IMR-90 (cell line): ENCODE measurements at regions of chr10 and their contacts with region 1.

Region 1: GRCh38 chr10:63629363-63630084 is 108.3 kb downstream of the REEP3 start:
- DNase-seq: peak; percentile 99
- ATAC-seq: peak; percentile 64
- H3K4me3 ChIP-seq: peak overlapping the region; percentile 86
- H3K27ac ChIP-seq: peak overlapping the region; percentile 98
- H3K4me1 ChIP-seq: 0 out of 2 replicates have a peak, but pooled peaks cover 3% of the 10 kb centered on the region
- H3K27me3 ChIP-seq: no peaks in the 10 kb centered on the region
- CTCF ChIP-seq: peak; percentile 93
- POLR2A ChIP-seq: peak; percentile 89
- RAD21 ChIP-seq: peak; percentile 96

Region 2: GRCh38 chr10:63133821-63134557 is 495.5 kb before region 1 on chr10:
- CTCF ChIA-PET with region 1: no interaction called
- POLR2A ChIA-PET with region 1: no interaction called
- dilution Hi-C with region 1: no loop called
- in situ Hi-C with region 1: no loop called
- intact Hi-C with region 1: no loop called
- DNase-seq: peak; percentile 53
- ATAC-seq: no peak
- H3K4me3 ChIP-seq: peak overlapping the region; percentile 82
- H3K27ac ChIP-seq: peak overlapping the region; percentile 80
- H3K4me1 ChIP-seq: peaks cover 2% of the 10 kb centered on the region; the same call in 1 of the 2 replicates
- H3K27me3 ChIP-seq: no peaks in the 10 kb centered on the region
- CTCF ChIP-seq: no peak
- POLR2A ChIP-seq: no peak
- RAD21 ChIP-seq: no peak

Region 3: GRCh38 chr10:63166742-63167258 is 462.7 kb before region 1 on chr10:
- CTCF ChIA-PET with region 1: interaction called, 24 read pairs
- POLR2A ChIA-PET with region 1: interaction called, 5 read pairs
- dilution Hi-C with region 1: no loop called
- in situ Hi-C with region 1: no loop called
- intact Hi-C with region 1: loop called (anchors 1 kb)
- DNase-seq: peak; percentile 85
- ATAC-seq: peak; percentile 73
- H3K4me3 ChIP-seq: no peak overlapping the region
- H3K27ac ChIP-seq: no peak overlapping the region
- H3K4me1 ChIP-seq: 0 out of 2 replicates have a peak, but pooled peaks cover 2% of the 10 kb centered on the region
- H3K27me3 ChIP-seq: no peaks in the 10 kb centered on the region
- CTCF ChIP-seq: peak; percentile 82
- POLR2A ChIP-seq: no peak
- RAD21 ChIP-seq: peak; percentile 78

Region 4: GRCh38 chr10:63206997-63207811 is 422.3 kb before region 1 on chr10:
- CTCF ChIA-PET with region 1: interaction called, 6 read pairs
- POLR2A ChIA-PET with region 1: interaction called, 3 read pairs
- dilution Hi-C with region 1: no loop called
- in situ Hi-C with region 1: no loop called
- intact Hi-C with region 1: loop called (anchors 2 kb)
- DNase-seq: peak; percentile 94
- ATAC-seq: peak; percentile 76
- H3K4me3 ChIP-seq: no peak overlapping the region; the same call in 1 of the 2 replicates
- H3K27ac ChIP-seq: peak overlapping the region; percentile 46; the same call in 1 of the 2 replicates
- H3K4me1 ChIP-seq: peaks cover 16% of the 10 kb centered on the region
- H3K27me3 ChIP-seq: no peaks in the 10 kb centered on the region
- CTCF ChIP-seq: no peak
- POLR2A ChIP-seq: no peak
- RAD21 ChIP-seq: no peak

Region 5: DNA sequence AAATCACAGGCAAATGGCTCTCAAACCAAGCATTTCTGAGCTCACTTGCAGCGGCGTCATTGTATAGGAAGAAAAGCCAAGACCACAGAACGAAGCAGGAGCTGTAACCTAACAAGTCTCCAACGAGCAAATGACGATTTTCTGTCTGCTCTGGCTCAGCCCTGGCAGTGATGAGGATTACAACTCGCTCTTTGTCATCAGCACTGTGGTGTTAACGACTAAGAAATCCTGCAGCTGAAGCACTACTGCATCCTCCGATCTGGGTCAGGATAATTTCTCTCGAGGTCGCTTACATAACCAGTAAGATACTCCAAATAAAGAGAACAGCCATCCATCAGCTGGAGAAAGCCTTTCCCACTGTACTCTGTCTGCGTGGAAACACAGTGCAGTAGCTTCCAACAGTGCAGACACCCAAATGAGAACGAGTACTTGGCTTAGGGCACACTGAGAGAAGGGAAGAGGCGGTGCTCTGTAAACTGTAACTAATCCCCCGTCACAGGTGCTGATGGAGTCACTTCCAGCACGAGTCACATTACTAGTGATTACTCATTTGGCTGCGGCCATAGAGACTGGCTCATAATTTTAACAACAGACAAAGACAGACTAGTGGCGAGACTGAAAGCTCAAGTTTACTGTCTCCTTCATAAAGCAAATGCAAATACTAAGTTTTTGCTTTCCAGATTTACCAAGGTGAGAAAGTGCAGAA is 360.6 kb before region 1 on chr10:
- CTCF ChIA-PET with region 1: interaction called, 4 read pairs
- POLR2A ChIA-PET with region 1: interaction called, 5 read pairs
- dilution Hi-C with region 1: no loop called
- in situ Hi-C with region 1: no loop called
- intact Hi-C with region 1: loop called (anchors 1 kb)
- DNase-seq: peak; percentile 97
- ATAC-seq: peak; percentile 80
- H3K4me3 ChIP-seq: peak overlapping the region; percentile 55
- H3K27ac ChIP-seq: peak overlapping the region; percentile 87
- H3K4me1 ChIP-seq: peaks cover 4% of the 10 kb centered on the region
- H3K27me3 ChIP-seq: no peaks in the 10 kb centered on the region
- CTCF ChIP-seq: peak; percentile 17; the same call in 1 of the 2 replicates
- POLR2A ChIP-seq: peak; percentile 98
- RAD21 ChIP-seq: peak; percentile 8; the same call in 1 of the 2 replicates

Region 6: DNA sequence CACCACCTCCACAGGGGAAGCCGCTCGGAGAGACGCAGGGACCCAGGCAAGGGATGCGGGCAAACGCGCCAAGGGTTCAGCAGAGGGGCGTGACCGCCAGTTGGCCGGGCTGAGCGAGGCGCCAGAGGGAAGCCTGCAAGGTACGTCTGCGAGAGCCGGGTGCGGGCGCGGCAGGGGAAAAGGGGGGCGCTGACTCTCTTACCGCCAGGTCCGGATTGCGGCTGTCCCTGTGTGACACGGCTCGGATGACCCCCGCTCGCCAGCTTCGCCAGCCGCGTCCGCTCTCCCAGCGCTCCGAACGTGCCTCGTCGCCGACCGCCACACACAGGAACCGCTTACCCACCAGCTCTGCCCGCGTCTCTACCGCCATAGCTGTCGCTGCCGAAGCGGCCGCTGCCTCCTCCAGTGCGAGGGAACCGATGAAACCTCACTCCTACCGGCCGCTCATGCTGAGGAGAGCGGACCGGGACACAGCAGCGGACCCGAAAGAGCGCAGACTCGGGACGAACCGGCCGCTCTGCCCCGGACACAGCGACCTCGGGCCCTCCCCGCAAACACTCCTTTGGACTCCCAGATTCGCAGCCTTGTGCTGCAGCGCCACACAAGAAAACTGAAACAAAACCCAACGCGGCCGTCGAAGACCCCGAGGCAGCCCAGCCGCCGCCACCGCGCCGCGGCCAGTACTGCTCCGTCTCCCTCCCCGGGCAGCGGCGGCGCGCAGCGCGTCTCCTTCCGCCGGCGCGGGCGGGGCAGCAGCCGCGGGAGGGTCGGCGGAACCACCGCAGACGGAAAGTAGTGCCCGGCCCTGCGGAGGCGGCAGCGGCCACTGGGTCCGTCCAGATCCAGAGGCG is 164.0 kb before region 1 on chr10 and contains the start of gene JMJD1C:
- CTCF ChIA-PET with region 1: interaction called, 6 read pairs
- POLR2A ChIA-PET with region 1: no interaction called
- dilution Hi-C with region 1: no loop called
- in situ Hi-C with region 1: no loop called
- intact Hi-C with region 1: loop called (anchors 2 kb)
- DNase-seq: peak; percentile 84
- ATAC-seq: peak; percentile 84
- H3K4me3 ChIP-seq: peak within 1 kb of the TSS; percentile 90
- H3K27ac ChIP-seq: peak within 1 kb of the TSS; percentile 90
- H3K4me1 ChIP-seq: peaks cover 4% of the 10 kb centered on the region; the same call in 1 of the 2 replicates
- H3K27me3 ChIP-seq: no peaks in the 10 kb centered on the region
- CTCF ChIP-seq: no peak
- POLR2A ChIP-seq: peak; percentile 89
- RAD21 ChIP-seq: peak; percentile 30
- total RNA-seq, gene JMJD1C: 96.8 and 108 TPM in 2 replicates

Region 7: DNA sequence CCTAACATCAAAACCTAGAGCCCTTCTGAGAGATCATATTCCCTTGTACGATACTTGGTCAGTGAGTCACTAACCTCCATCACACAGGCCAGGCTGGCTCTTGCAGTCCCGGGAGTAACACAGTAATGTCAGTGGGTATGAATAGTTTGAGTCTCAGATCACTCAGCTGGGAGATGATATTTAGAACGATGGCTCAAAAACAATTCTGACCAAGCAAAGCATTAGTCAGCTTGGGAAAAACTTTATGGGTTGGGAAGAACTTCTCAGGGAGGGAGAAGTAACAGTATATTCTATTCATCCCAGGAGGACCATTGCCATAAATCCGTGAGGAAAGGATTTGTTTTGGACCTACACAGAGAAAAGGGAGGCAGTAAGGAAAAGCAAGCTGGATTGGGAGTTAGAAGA is 70.7 kb after region 1 on chr10:
- CTCF ChIA-PET with region 1: no interaction called
- POLR2A ChIA-PET with region 1: no interaction called
- dilution Hi-C with region 1: no loop called
- in situ Hi-C with region 1: no loop called
- intact Hi-C with region 1: loop called (anchors 2 kb)
- DNase-seq: peak; percentile 99
- ATAC-seq: peak; percentile 96
- H3K4me3 ChIP-seq: no peak overlapping the region
- H3K27ac ChIP-seq: peak overlapping the region; percentile 7; the same call in 1 of the 2 replicates
- H3K4me1 ChIP-seq: peaks cover 6% of the 10 kb centered on the region
- H3K27me3 ChIP-seq: no peaks in the 10 kb centered on the region
- CTCF ChIP-seq: no peak
- POLR2A ChIP-seq: no peak
- RAD21 ChIP-seq: no peak

Region 8: GRCh38 chr10:63720072-63720537 is 90.6 kb after region 1 on chr10:
- CTCF ChIA-PET with region 1: interaction called, 35 read pairs
- POLR2A ChIA-PET with region 1: no interaction called
- dilution Hi-C with region 1: no loop called
- in situ Hi-C with region 1: no loop called
- intact Hi-C with region 1: loop called (anchors 2 kb)
- DNase-seq: peak; percentile 45
- ATAC-seq: peak; percentile 69
- H3K4me3 ChIP-seq: no peak overlapping the region
- H3K27ac ChIP-seq: no peak overlapping the region
- H3K4me1 ChIP-seq: no peaks in the 10 kb centered on the region
- H3K27me3 ChIP-seq: peaks cover 7% of the 10 kb centered on the region
- CTCF ChIP-seq: peak; percentile 96
- POLR2A ChIP-seq: no peak
- RAD21 ChIP-seq: peak; percentile 93

Region 9: GRCh38 chr10:63758080-63758479 is 128.6 kb after region 1 on chr10:
- CTCF ChIA-PET with region 1: no interaction called
- POLR2A ChIA-PET with region 1: no interaction called
- dilution Hi-C with region 1: no loop called
- in situ Hi-C with region 1: no loop called
- intact Hi-C with region 1: no loop called
- DNase-seq: peak; percentile 68
- ATAC-seq: peak; percentile 91
- H3K4me3 ChIP-seq: no peak overlapping the region
- H3K27ac ChIP-seq: no peak overlapping the region
- H3K4me1 ChIP-seq: peaks cover 2% of the 10 kb centered on the region
- H3K27me3 ChIP-seq: peaks cover 18% of the 10 kb centered on the region
- CTCF ChIP-seq: no peak
- POLR2A ChIP-seq: no peak
- RAD21 ChIP-seq: no peak